Cardiac septum (tissue), 1 donor: ENCODE measurements at regions of chr1 and their contacts with region 1.

Region 1: GRCh38 chr1:25103164-25103795 is 129.0 kb downstream of the SYF2 start:
- DNase-seq: no peak

Region 2: DNA sequence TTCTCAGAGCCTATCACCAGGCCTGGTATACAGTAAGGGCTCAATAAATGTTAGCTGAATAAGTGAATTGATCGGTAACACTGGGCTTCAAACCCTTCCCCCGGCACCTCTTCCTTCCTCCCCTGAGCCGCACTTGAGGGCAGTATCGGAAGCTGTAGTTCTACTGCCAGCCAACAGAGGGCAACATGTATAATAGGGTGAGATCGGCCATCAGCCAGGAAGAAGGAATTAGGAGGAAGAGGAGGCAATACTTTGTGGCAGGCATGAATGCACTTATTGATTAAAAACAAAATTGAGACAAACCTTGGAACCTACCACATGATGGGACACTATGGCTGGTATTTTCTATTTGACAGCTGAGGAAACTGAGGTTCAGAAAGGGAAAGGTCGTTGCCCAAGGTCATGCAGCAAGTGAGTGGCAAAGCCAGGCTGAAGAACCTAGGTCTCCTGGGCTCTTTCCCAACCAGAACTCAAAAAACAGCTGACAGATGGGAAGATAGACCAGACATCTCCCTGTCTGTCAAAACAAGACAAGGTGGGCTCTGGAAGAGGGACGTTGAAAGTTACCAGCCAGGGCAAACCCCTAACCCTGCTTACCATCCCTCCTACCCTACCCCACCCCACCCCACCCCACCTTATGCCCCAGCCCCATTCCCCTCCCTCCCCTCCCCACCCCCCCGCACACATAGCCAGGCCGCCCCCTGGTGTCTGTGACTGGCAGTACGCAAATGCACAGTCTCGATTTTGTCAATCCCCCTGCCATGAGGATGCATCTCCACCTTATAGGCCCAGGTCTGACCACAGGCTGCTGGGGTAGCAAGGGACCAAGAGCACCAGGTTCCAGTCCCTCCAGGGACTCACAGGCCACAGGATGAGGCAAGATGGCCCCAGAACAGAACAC is 65.9 kb before region 1 on chr1:
- intact Hi-C with region 1: loop called (anchors 5 kb)
- DNase-seq: no peak